Left ventricle myocardium inferior (tissue), 1 donor: ENCODE measurements at regions of chr11 and their contacts with region 1.

Region 1: DNA sequence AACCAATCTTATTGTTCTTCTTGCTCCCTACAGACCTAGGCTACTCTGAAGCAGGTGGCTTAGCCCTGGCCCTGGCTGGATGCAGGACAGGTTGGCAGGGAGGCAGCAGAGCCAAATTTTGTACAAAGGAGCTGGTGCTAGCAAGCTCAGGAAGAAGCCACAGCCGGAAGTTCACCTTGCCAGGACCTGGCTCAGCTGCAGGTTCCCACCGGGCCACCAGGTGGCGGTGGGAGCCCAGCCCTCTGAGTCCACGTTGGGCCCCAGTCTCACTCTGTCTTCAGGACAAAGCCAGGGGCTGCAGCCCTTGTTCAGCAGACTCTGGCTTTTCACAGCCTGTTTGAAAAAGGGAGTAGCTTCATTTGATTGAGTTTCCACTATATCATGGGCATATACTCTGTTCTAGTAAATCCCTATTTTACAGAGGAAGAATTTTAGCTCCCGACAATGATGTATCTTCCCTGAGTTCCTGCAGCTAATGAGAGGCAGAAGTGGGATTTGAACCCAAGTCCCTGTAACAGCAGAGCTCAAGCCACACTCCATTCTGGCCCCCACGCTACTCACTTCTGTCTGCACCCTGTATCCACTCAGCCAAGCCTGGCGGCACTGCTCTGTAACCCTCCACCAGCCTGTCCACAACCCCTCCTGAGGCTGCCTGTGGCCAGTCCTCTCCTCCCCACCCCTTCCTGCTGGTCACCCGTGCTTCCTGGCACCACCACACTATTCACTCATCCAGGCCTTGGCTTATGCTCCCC is 3.3 kb downstream of the TKFC start:
- DNase-seq: peak; percentile 71
- H3K4me3 ChIP-seq: no peak overlapping the region
- H3K27ac ChIP-seq: peak overlapping the region; percentile 64
- H3K4me1 ChIP-seq: peaks cover 37% of the 10 kb centered on the region
- H3K27me3 ChIP-seq: no peaks in the 10 kb centered on the region
- CTCF ChIP-seq: peak; percentile 96

Region 2: DNA sequence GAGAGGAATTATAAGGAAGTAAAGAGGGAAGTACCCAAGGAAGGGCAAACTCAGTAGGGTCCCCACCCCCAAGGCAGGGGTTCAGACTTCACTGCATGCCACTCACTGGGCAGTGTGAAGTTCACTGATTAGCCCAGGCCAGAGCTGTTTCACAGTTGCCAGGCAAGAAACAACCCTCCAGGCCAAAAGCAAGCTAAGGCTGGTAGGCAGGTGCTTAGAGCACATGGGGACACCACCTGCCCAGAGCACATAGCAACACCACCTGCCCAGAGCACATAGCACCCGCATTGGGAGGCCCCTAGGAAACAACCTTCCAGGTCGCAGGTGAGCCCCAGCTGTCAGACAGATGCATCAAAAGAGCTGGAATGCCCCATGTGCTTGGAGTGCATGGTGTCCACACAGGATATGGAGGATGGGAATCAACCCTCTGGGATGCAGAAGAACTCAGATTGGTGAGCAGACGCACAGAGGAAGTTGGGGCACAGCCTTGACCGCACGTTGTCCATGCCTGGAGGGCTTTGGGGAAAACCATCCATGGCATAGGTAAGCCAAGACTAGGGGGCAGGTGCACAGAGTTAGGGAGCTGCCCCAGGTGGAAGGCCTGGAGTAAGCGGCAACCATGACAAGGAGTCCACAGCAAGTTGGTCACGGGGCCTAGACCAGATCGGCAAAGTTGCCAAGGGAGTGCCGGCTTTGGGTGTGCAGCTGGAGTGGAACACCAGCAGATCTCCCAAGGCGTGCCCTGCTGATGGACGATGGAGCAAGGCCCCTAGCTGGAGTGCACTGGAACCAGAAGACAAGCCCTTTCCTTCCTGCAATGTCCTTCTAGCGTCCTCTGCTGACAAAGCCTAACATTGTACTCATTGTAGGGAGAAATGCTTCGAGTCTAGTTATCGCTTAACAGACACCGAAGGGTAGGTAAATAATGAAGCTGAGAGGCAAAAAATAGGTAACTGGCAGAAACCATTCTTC is 48.2 kb after region 1 on chr11:
- intact Hi-C with region 1: loop called (anchors 5 kb)
- DNase-seq: no peak
- H3K4me3 ChIP-seq: no peak overlapping the region
- H3K27ac ChIP-seq: no peak overlapping the region
- H3K4me1 ChIP-seq: peaks cover 3% of the 10 kb centered on the region
- H3K27me3 ChIP-seq: no peaks in the 10 kb centered on the region
- CTCF ChIP-seq: no peak

Region 3: DNA sequence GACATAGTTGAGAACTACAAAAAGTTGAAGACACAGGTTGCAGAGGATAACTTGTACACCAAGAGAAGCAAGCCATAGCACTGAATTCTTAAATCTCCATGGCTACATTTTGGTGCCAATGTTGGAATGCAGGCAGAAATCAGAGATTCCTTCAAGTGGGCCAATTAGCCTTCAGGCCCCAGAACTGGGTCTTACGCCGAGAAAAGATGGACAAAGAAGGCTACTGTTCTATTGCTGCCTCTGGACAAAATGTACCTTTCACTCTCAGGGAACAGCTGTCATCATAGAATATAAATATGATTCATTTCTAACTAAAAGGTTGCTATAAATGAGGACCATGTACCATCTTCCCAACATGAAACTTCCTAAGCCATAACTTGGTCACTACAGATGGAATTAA is 69.7 kb after region 1 on chr11:
- intact Hi-C with region 1: no loop called
- DNase-seq: no peak
- H3K4me3 ChIP-seq: no peak overlapping the region
- H3K27ac ChIP-seq: no peak overlapping the region
- H3K4me1 ChIP-seq: no peaks in the 10 kb centered on the region
- H3K27me3 ChIP-seq: no peaks in the 10 kb centered on the region
- CTCF ChIP-seq: no peak